GM13976 (cell line): ENCODE measurements at regions of chr9 and their contacts with region 1.

Region 1: GRCh38 chr9:70484210-70485130 is 70.0 kb upstream of the KLF9 start:
- DNase-seq: peak; percentile 59
- CTCF ChIP-seq: peak; percentile 38

Region 2: DNA sequence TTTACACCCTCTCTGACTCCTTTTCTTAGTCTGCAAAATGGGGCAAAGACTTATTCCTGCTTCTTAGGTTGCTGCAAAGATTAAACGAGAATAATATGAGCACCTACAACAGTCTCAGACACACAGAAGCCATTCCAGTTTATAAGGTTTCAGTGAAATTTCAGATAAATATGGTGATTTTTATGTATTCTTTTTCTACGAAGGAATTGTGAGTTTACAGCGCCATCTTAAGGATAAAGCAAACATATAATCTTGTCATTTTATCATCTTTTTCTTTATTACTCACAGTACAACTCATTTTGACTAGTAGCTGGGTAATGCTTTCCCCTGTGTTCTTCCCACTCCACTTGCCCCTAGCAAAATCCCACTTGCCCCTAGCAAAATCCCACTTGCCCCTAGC is 254.9 kb before region 1 on chr9:
- in situ Hi-C with region 1: no loop called
- DNase-seq: no peak
- CTCF ChIP-seq: no peak

Region 3: DNA sequence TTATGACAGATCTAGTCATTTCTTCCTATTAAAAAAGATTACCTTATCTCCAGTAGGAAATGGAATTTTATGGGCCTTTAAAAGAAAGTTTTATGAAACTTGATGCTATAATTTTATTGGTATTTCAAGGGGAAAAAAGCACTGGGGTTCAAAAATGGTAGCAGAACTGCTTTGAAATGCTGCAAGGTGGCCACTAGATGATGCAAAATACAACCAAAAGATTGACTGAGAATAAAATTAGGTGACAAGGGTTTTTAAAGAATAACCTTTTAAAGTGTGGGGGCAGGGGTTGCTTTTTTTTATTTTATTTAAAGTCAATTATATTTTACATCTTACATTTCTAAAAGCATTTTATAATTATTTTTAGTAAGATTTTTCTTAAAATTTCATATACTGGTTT is 131.7 kb before region 1 on chr9:
- in situ Hi-C with region 1: loop called (anchors 10 kb)
- DNase-seq: no peak
- CTCF ChIP-seq: peak; percentile 47